AG04450 (cell line): ENCODE measurements at regions of chr12 and their contacts with region 1.

Region 1: GRCh38 chr12:108618079-108618952 is 15.4 kb downstream of the SELPLG start:
- DNase-seq: peak; percentile 72
- H3K4me3 ChIP-seq: no peak overlapping the region
- H3K27ac ChIP-seq: no peak overlapping the region
- H3K27me3 ChIP-seq: no peaks in the 10 kb centered on the region
- CTCF ChIP-seq: peak; percentile 94

Region 2: GRCh38 chr12:108214486-108214885 is 403.8 kb before region 1 on chr12:
- CTCF ChIA-PET with region 1: no interaction called
- POLR2A ChIA-PET with region 1: no interaction called
- DNase-seq: no peak
- H3K4me3 ChIP-seq: no peak overlapping the region
- H3K27ac ChIP-seq: no peak overlapping the region
- H3K27me3 ChIP-seq: no peaks in the 10 kb centered on the region
- CTCF ChIP-seq: no peak

Region 3: GRCh38 chr12:108360487-108360886 is 257.8 kb before region 1 on chr12:
- CTCF ChIA-PET with region 1: no interaction called
- POLR2A ChIA-PET with region 1: no interaction called
- DNase-seq: no peak
- H3K4me3 ChIP-seq: no peak overlapping the region
- H3K27ac ChIP-seq: no peak overlapping the region
- H3K27me3 ChIP-seq: no peaks in the 10 kb centered on the region
- CTCF ChIP-seq: no peak

Region 4: GRCh38 chr12:108562348-108563135 is 55.8 kb before region 1 on chr12 and contains the start of gene ISCU:
- CTCF ChIA-PET with region 1: interaction called, 508 read pairs
- POLR2A ChIA-PET with region 1: interaction called, 5 read pairs
- DNase-seq: peak; percentile 94
- H3K4me3 ChIP-seq: peak within 1 kb of the TSS; percentile 100
- H3K27ac ChIP-seq: peak within 1 kb of the TSS; percentile 87
- H3K27me3 ChIP-seq: no peaks in the 10 kb centered on the region
- CTCF ChIP-seq: no peak
- polyA plus RNA-seq, gene ISCU: 164 and 184 TPM in 2 replicates

Region 5: DNA sequence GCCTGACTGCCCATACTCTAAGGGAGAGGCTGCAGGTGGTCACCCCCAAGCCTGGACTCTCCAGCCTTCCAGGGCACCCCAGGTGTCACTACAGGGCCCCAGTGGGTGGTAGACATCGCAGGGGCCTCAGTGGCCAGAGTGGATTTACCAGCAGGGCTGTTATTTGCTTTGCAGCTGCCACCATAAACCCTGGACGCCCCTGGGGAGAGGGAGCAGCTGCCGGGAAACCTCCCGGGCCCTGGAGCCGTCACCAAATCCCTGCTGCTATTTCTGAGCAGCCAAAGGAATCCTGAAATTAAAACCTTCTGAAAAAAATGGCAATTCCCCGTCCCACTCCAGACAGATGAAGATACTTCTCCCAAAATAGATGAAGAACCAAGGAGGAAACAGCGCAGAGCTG is 34.3 kb before region 1 on chr12:
- CTCF ChIA-PET with region 1: interaction called, 12 read pairs
- POLR2A ChIA-PET with region 1: no interaction called
- DNase-seq: no peak
- H3K4me3 ChIP-seq: no peak overlapping the region
- H3K27ac ChIP-seq: no peak overlapping the region
- H3K27me3 ChIP-seq: peaks cover 2% of the 10 kb centered on the region
- CTCF ChIP-seq: no peak

Region 6: GRCh38 chr12:108629824-108630476 is 11.6 kb after region 1 on chr12:
- CTCF ChIA-PET with region 1: interaction called, 44 read pairs
- POLR2A ChIA-PET with region 1: no interaction called
- DNase-seq: no peak
- H3K4me3 ChIP-seq: no peak overlapping the region
- H3K27ac ChIP-seq: peak overlapping the region; percentile 91
- H3K27me3 ChIP-seq: no peaks in the 10 kb centered on the region
- CTCF ChIP-seq: no peak

Region 7: GRCh38 chr12:108664338-108665258 is 46.3 kb after region 1 on chr12:
- CTCF ChIA-PET with region 1: interaction called, 10 read pairs
- POLR2A ChIA-PET with region 1: no interaction called
- DNase-seq: peak; percentile 87
- H3K4me3 ChIP-seq: no peak overlapping the region
- H3K27ac ChIP-seq: peak overlapping the region; percentile 75
- H3K27me3 ChIP-seq: no peaks in the 10 kb centered on the region
- CTCF ChIP-seq: peak; percentile 98

Region 8: DNA sequence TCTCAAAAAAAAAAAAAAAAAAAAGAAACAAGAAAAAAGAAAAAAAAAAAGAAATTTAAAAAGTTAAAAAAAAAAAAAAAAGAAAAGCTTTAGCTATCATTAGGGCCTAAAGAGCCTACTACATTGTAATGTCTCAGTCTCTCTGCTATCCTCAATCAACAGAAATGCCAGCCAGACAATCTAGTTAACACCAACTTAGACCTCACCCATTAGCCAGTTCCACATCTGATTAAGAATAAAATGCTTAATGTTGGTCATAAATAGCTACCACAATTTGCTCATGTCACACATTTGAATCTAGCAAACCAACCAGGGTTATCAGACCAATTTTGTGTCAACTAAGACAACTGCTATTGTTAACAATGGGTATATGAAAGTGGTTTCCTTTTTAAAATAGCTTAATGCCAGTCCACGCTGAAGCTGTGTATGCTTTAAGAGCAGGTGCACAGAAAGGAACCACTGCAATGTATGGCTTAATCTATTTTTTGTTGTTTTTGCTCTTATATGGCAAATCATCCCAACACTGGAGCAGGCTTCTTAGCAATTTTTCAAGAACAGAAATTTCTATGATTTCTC is 60.9 kb after region 1 on chr12:
- CTCF ChIA-PET with region 1: no interaction called
- POLR2A ChIA-PET with region 1: no interaction called
- DNase-seq: no peak
- H3K4me3 ChIP-seq: no peak overlapping the region
- H3K27ac ChIP-seq: no peak overlapping the region
- H3K27me3 ChIP-seq: no peaks in the 10 kb centered on the region
- CTCF ChIP-seq: no peak

Region 9: DNA sequence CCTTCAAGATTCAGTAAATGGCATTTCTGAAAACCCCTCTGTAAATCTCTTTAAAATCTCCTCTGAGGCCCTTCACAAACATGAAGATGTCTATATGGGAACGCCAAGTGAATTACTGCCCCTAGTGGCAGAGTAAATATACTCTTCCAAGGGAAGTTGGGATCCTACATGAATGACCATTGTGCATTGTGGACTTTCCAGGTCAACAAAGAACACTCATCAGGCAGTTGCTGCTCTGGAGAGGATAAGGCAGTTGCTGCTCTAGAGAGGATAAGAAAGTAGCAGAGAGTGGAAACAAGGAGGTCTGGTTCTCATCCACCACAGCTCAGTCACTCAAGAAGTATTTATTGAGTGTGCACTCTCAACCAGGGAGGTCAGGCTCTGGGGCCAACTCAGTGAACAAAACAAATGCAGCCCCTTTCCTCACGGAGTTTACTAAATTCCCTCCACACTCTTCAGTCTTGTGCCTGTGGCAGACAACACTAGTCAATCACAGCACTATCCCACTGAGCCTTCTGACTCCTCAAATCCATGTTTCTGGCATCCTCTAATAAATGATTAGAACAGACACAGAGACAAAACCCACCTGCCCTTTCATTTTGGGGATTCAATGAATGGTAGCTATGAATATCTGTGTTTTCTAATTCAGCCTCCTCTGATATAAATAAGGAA is 349.7 kb after region 1 on chr12:
- CTCF ChIA-PET with region 1: no interaction called
- POLR2A ChIA-PET with region 1: no interaction called
- DNase-seq: no peak
- H3K4me3 ChIP-seq: no peak overlapping the region
- H3K27ac ChIP-seq: no peak overlapping the region
- H3K27me3 ChIP-seq: peaks cover 8% of the 10 kb centered on the region
- CTCF ChIP-seq: peak; percentile 29